ENCODE measurements at regions of chr17 and their contacts with region 1.

Region 1: GRCh38 chr17:78697554-78698343 is 84.3 kb downstream of the CYTH1 start:
- DNase-seq: no peak
- ATAC-seq: peak; percentile 73
- H3K4me3 Mint-ChIP-seq: peak overlapping the region; percentile 25
- H3K27ac Mint-ChIP-seq: peak overlapping the region; percentile 80
- H3K4me1 Mint-ChIP-seq: peaks cover 54% of the 10 kb centered on the region
- H3K27me3 Mint-ChIP-seq: no peaks in the 10 kb centered on the region
- CTCF ChIP-seq: no peak

Region 2: DNA sequence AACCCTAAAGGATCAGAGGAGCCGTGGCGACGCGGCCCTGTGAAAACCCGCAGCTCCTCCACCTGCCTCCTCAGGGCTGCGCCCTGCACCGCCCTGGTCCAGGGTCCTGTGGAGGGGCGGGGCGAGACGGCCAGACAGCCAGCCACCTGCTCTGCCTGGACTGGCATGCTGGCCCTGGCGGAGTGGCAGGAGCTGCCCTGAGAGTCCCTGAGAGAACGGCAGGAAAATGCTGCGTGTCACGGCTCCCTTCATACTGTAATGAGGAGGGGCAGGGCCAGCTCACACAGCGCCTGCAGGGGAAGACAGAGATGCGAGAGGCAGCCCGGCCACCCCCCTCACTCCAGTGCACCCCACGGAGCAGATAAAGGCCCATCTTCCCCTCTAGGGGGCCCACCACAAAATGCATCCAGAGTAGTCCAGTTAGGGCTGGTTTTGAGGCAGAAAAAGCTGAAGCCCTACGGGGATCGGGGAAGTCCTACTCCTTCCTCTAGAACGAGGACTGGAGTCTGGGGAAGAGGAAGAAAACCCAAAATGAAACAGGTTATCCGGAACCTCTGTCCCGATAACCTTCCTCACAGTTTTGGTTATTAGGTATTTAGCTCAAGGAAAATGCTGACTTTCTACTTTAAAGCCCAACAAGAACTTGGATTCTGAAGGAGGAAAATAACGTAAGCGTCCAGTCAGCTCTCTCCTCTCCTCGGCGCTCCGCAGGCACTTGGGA is 23.0 kb before region 1 on chr17:
- CTCF ChIA-PET with region 1: interaction called, 4 read pairs
- POLR2A ChIA-PET with region 1: interaction called, 13 read pairs
- intact Hi-C with region 1: no loop called
- DNase-seq: no peak
- ATAC-seq: no peak
- H3K4me3 Mint-ChIP-seq: no peak overlapping the region
- H3K27ac Mint-ChIP-seq: no peak overlapping the region
- H3K4me1 Mint-ChIP-seq: no peaks in the 10 kb centered on the region
- H3K27me3 Mint-ChIP-seq: no peaks in the 10 kb centered on the region
- CTCF ChIP-seq: no peak

Region 3: GRCh38 chr17:78716814-78717393 is 19.2 kb after region 1 on chr17:
- CTCF ChIA-PET with region 1: interaction called, 4 read pairs
- POLR2A ChIA-PET with region 1: interaction called, 25 read pairs
- intact Hi-C with region 1: no loop called
- DNase-seq: no peak
- ATAC-seq: peak; percentile 28
- H3K4me3 Mint-ChIP-seq: peak overlapping the region; percentile 65
- H3K27ac Mint-ChIP-seq: peak overlapping the region; percentile 78
- H3K4me1 Mint-ChIP-seq: peaks cover 95% of the 10 kb centered on the region
- H3K27me3 Mint-ChIP-seq: no peaks in the 10 kb centered on the region
- CTCF ChIP-seq: no peak

Region 4: GRCh38 chr17:79482752-79483521 is 785.2 kb after region 1 on chr17:
- CTCF ChIA-PET with region 1: no interaction called
- POLR2A ChIA-PET with region 1: no interaction called
- intact Hi-C with region 1: no loop called
- DNase-seq: no peak
- ATAC-seq: no peak
- H3K4me3 Mint-ChIP-seq: no peak overlapping the region
- H3K27ac Mint-ChIP-seq: no peak overlapping the region
- H3K4me1 Mint-ChIP-seq: no peaks in the 10 kb centered on the region
- H3K27me3 Mint-ChIP-seq: peaks cover 46% of the 10 kb centered on the region
- CTCF ChIP-seq: no peak